Sciatic nerve (tissue), 2 donors: ENCODE measurements at regions of chr7 and their contacts with region 1.

Region 1: DNA sequence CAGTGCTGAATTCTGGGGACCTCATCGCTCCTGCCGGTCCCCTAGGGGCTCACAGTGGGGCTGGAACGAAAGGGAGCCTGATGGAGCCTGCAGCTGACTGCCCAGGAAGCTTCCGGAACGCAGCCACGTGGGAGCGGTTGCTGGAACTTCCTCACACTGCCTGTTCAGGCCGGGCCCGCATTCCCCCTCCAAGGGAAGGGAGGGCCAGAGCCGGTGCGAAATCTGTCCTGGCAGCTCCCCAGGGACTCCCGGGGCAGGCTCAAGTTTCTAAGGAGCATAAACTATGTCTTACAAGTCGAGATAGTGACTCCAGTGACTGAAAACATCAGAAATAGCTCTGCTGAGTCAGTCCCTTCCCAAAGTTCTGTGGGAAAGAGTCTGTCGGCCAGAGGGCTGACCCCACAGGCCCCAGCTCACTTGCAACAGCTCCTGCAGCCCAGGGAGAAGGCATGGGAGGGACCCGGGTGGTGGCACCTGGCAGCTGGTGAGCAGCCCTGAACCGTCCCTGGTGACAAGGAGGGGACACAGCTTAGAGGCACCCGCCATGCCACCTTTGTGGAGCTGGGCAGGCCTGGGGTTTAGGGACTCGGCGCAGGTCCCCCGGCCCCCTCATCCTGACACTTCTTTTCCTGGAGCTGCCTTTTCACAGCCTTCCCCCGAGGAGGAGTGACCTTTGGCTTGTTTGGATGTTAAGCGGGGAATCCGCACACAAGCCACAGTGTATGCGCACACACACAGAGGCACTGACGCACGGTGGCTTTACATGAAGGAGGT is 47.6 kb downstream of the PDGFA start:
- DNase-seq: peak; percentile 73
- ATAC-seq: peak; percentile 66

Region 2: DNA sequence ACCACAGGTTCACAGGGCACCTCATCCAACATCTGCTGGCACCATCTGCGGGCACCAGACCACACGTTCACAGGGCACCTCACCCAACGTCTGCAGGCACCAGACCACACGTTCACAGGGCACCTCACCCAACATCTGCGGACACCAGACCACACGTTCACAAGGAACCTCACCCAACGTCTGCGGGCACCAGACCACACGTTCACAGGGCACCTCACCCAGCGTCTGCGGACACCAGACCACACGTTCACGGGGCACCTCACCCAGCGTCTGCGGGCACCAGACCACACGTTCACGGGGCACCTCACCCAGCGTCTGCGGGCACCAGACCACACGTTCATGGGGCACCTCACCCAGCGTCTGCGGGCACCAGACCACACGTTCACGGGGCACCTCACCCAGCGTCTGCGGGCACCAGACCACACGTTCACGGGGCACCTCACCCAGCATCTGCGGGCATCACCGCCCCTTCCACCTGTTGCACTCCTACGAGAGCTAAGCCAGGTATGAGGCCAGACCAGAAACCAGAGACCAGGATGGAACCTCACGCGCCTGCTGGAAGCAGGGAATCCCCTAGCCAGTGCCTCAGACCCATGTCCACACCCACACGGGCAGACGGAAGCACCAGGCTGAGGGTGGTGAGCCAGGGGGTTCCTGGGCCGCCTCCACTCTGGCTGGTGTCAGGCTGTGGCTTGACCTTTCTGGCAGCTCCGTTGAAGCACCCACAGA is 1577.9 kb after region 1 on chr7:
- intact Hi-C with region 1: loop called (anchors 5 kb)
- DNase-seq: peak; percentile 18
- ATAC-seq: no peak